CD14-positive monocyte (primary cell): ENCODE measurements at regions of chr12 and their contacts with region 1.

Region 1: GRCh38 chr12:106118-106591 is 39.6 kb downstream of the IQSEC3 start:
- DNase-seq: no peak
- H3K4me3 ChIP-seq: no peak overlapping the region
- H3K4me3 Mint-ChIP-seq: no peak overlapping the region
- H3K27ac ChIP-seq: no peak overlapping the region
- H3K27ac Mint-ChIP-seq: no peak overlapping the region
- H3K4me1 ChIP-seq: peaks cover 5 to 23% of the 10 kb centered on the region in 2 donors
- H3K4me1 Mint-ChIP-seq: peaks cover 28% of the 10 kb centered on the region
- H3K27me3 ChIP-seq: no peaks in the 10 kb centered on the region
- H3K27me3 Mint-ChIP-seq: peaks cover 3 to 10% (median 9%) of the 10 kb centered on the region in 3 donors
- CTCF ChIP-seq: no peak

Region 2: DNA sequence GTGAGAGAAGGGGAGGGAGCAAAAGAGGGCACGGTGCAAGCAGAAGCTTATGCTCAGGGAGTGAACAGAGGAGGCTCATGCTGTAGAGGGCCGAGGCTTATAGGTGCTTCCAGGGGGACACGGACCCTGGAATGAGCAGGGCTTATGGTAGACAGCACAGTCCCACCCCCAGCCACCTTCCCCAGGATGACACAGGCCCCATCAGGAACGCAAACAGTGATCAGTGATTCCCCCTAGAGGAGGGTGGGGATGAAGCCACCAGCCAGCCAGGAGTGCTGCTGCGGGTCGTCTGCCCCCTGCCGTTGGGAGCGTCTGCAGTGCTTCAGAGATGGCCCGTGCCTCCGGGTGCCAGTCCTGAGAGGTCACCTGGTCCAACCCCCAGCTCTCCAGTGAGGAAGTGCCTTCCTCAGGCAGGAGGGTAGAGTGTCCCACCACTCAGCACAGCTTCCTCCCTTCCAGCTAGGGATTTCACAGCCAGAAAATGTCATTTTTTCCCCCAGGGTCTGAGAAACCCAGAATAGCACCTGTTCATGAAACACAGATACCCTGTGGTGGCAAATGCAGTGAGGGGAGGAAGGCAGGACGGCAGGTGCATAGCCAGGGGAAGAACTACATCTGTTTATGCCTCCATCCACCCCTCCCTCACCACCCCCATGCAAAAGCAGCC is 47.1 kb after region 1 on chr12:
- intact Hi-C with region 1: loop called in 1 of 2 experiments (anchors 5 kb)
- DNase-seq: peak; percentile 42 to 68 (median 42)
- H3K4me3 ChIP-seq: no peak overlapping the region
- H3K4me3 Mint-ChIP-seq: no peak overlapping the region
- H3K27ac ChIP-seq: no peak overlapping the region
- H3K27ac Mint-ChIP-seq: peak overlapping the region in 1 of 7 donors; percentile 7
- H3K4me1 ChIP-seq: no peaks in the 10 kb centered on the region
- H3K4me1 Mint-ChIP-seq: peaks cover 7% of the 10 kb centered on the region
- H3K27me3 ChIP-seq: no peaks in the 10 kb centered on the region
- H3K27me3 Mint-ChIP-seq: peaks cover 0 to 7% (median 0%) of the 10 kb centered on the region in 3 donors
- CTCF ChIP-seq: peak; percentile 75